AG04449 (cell line): ENCODE measurements at regions of chr2 and their contacts with region 1.

Region 1: DNA sequence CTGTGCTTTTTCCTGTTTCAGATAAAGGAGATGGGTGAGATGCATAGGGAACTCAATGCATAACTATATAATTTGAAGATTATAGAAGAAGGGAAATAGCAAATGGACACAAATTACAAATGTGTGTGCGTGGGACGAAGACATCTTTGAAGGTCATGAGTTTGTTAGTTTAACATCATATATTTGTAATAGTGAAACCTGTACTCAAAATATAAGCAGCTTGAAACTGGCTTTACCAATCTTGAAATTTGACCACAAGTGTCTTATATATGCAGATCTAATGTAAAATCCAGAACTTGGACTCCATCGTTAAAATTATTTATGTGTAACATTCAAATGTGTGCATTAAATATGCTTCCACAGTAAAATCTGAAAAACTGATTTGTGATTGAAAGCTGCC is 16.4 kb upstream of the MSH2 start:
- DNase-seq: no peak
- H3K4me3 ChIP-seq: no peak overlapping the region
- CTCF ChIP-seq: no peak

Region 2: DNA sequence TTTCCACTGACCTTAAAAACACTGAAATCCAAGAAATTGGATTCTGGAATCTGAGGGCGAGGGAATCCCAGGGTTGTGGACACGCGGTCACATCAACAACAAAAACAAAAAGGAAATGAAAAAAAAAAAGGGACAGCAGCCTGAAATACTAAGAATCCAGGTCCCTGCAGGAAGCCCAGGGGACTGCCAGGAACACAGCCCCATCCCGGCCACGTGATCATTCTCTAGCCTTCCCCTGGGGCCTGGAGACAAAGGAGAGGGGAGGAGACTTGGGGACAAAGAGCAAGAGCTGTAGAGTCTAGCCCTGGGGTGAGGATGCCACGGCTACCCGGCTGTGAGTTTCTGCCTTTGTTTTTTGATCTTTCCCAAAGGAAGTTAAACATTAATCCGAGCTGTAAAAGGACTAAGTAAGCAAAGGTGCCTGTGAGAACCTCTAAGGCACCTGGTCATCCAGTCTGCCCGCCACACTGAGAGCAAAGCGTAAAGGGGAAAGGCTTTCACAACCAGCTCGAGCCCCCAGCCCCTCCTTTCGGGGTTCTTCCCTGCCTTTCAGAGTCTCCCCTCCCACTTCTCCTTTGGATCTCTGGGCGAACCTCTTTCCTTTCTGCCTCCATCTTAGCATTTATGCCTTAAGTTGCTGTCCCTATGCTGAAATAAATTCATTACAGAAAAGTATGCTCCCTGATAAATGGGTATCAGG is 41.5 kb before region 1 on chr2:
- CTCF ChIA-PET with region 1: interaction called, 41 read pairs
- POLR2A ChIA-PET with region 1: no interaction called
- DNase-seq: no peak
- H3K4me3 ChIP-seq: peak overlapping the region; percentile 6; the same call in 1 of the 2 replicates
- CTCF ChIP-seq: no peak

Region 3: GRCh38 chr2:47373747-47374146 is 12.8 kb before region 1 on chr2:
- CTCF ChIA-PET with region 1: interaction called, 20 read pairs
- POLR2A ChIA-PET with region 1: no interaction called
- DNase-seq: no peak
- H3K4me3 ChIP-seq: no peak overlapping the region
- CTCF ChIP-seq: no peak